CD14-positive monocyte (primary cell): ENCODE measurements at regions of chr19 and their contacts with region 1.

Region 1: GRCh38 chr19:15177269-15178116 is 23.3 kb downstream of the NOTCH3 start:
- DNase-seq: peak; percentile 82 to 86 (median 85)
- H3K4me3 ChIP-seq: peak overlapping the region in 1 of 3 experiments; percentile 44
- H3K4me3 Mint-ChIP-seq: peak overlapping the region in 1 of 2 donors; percentile 82
- H3K27ac ChIP-seq: no peak overlapping the region
- H3K27ac Mint-ChIP-seq: no peak overlapping the region
- H3K4me1 ChIP-seq: peaks cover 5 to 11% of the 10 kb centered on the region in 2 donors
- H3K4me1 Mint-ChIP-seq: peaks cover 6% of the 10 kb centered on the region
- H3K27me3 ChIP-seq: peaks cover 0 to 6% of the 10 kb centered on the region in 2 donors
- H3K27me3 Mint-ChIP-seq: peaks cover 14 to 25% (median 24%) of the 10 kb centered on the region in 3 donors
- CTCF ChIP-seq: peak; percentile 96

Region 2: GRCh38 chr19:15251749-15252397 is 74.4 kb after region 1 on chr19:
- intact Hi-C with region 1: loop called (anchors 1 to 5 kb)
- DNase-seq: no peak
- H3K4me3 ChIP-seq: no peak overlapping the region
- H3K4me3 Mint-ChIP-seq: no peak overlapping the region
- H3K27ac ChIP-seq: no peak overlapping the region
- H3K27ac Mint-ChIP-seq: peak overlapping the region in 3 of 7 donors; percentile 23 to 67 (median 41)
- H3K4me1 ChIP-seq: no peaks in the 10 kb centered on the region
- H3K4me1 Mint-ChIP-seq: no peaks in the 10 kb centered on the region
- H3K27me3 ChIP-seq: no peaks in the 10 kb centered on the region
- H3K27me3 Mint-ChIP-seq: no peaks in the 10 kb centered on the region
- CTCF ChIP-seq: no peak